ENCODE measurements at regions of chr11 and their contacts with region 1.

Region 1: DNA sequence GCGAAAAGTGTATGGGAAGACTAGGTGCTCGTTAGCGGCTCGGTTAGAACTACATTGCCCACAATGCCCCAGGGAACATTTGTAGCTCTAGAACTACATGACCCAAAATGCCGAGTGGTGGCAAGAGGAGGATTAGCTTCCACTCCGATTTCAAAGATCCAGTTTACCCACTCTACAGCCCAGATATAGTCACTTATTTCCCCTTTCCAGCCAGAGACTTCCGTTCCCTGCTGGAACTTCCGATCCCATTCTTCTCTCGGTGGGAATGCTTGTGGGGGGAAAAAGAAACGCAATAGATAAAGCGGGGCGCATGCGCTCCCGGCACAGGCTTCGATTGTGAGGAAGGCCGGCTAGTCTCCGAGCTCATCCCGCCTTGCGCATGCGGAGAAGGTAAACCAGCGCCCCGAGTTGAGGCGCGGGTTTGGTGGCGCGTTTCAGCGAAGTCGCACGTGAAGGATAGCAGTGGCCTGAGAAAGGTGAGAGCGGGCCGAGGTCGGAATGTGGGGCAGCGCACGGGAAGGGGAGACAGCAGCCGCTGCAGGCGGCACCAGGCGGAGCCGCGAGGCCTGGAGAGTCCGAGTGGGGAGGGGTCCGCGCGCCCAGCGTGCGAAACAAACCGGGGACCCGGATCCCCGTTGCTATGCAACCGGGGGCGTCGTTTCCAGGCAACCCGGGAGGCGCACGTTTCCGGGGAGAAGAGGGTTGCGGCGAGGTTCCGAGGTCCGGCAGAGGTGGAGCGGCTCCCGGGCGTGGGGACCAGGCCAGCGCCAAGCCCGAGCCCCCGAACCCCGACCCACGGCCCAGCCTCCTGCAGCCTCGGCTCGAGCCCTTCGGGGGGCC is at the start of gene TMEM109:
- DNase-seq: peak; percentile 77 to 93 (median 85)
- ATAC-seq: peak; percentile 70 to 79 (median 74)
- H3K4me3 ChIP-seq: peak within 1 kb of the TSS; percentile 69 to 96
- H3K4me3 Mint-ChIP-seq: peak within 1 kb of the TSS; percentile 97 to 98 (median 98)
- H3K27ac ChIP-seq: peak within 1 kb of the TSS; percentile 94
- H3K27ac Mint-ChIP-seq: peak within 1 kb of the TSS; percentile 98
- H3K4me1 ChIP-seq: peaks cover 34 to 66% of the 10 kb centered on the region in 2 experiments
- H3K4me1 Mint-ChIP-seq: peaks cover 63 to 69% (median 65%) of the 10 kb centered on the region in 3 donors
- H3K27me3 ChIP-seq: no peaks in the 10 kb centered on the region
- H3K27me3 Mint-ChIP-seq: no peaks in the 10 kb centered on the region
- total RNA-seq, gene TMEM109: 55.6 to 82.1 (median 71.8) TPM

Region 2: DNA sequence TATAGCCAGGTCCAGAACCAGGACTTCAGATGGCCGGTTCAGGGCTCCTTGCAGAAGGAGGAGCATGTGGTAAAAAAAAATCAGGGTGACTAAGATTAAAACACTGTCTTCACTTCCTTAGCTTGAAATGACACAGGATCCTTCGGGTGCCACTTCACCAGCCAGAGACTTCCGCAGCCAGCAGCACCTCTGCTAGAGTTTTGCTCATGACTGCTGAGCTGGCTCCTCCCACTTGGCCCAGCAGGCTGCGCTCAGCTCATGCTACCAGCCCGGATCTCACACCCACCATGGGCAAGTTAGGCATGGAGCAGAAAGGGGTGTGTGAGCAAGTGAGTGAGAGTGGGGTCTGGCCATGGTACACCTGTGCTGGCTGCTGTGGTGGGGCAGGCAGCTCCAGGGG is 196.1 kb before region 1 on chr11:
- CTCF ChIA-PET with region 1: no interaction called
- POLR2A ChIA-PET with region 1: no interaction called
- DNase-seq: peak in 17 of 35 experiments; percentile 1 to 47 (median 7)
- ATAC-seq: peak in 2 of 4 experiments; percentile 32 to 36
- H3K4me3 ChIP-seq: no peak overlapping the region
- H3K4me3 Mint-ChIP-seq: no peak overlapping the region
- H3K27ac ChIP-seq: no peak overlapping the region
- H3K27ac Mint-ChIP-seq: no peak overlapping the region
- H3K4me1 ChIP-seq: no peaks in the 10 kb centered on the region
- H3K4me1 Mint-ChIP-seq: no peaks in the 10 kb centered on the region
- H3K27me3 ChIP-seq: peaks cover 0 to 17% of the 10 kb centered on the region in 2 experiments
- H3K27me3 Mint-ChIP-seq: peaks cover 33 to 51% of the 10 kb centered on the region in 2 donors

Region 3: GRCh38 chr11:60899046-60899936 is 14.7 kb before region 1 on chr11:
- CTCF ChIA-PET with region 1: interaction called, 4 to 16 read pairs
- POLR2A ChIA-PET with region 1: no interaction called
- DNase-seq: peak in 6 of 35 experiments; percentile 8 to 73 (median 24)
- ATAC-seq: peak; percentile 71 to 74 (median 72)
- H3K4me3 ChIP-seq: no peak overlapping the region
- H3K4me3 Mint-ChIP-seq: no peak overlapping the region
- H3K27ac ChIP-seq: no peak overlapping the region
- H3K27ac Mint-ChIP-seq: no peak overlapping the region
- H3K4me1 ChIP-seq: peaks cover 0 to 6% of the 10 kb centered on the region in 2 experiments
- H3K4me1 Mint-ChIP-seq: peaks cover 18 to 20% (median 19%) of the 10 kb centered on the region in 3 donors
- H3K27me3 ChIP-seq: no peaks in the 10 kb centered on the region
- H3K27me3 Mint-ChIP-seq: no peaks in the 10 kb centered on the region

Region 4: DNA sequence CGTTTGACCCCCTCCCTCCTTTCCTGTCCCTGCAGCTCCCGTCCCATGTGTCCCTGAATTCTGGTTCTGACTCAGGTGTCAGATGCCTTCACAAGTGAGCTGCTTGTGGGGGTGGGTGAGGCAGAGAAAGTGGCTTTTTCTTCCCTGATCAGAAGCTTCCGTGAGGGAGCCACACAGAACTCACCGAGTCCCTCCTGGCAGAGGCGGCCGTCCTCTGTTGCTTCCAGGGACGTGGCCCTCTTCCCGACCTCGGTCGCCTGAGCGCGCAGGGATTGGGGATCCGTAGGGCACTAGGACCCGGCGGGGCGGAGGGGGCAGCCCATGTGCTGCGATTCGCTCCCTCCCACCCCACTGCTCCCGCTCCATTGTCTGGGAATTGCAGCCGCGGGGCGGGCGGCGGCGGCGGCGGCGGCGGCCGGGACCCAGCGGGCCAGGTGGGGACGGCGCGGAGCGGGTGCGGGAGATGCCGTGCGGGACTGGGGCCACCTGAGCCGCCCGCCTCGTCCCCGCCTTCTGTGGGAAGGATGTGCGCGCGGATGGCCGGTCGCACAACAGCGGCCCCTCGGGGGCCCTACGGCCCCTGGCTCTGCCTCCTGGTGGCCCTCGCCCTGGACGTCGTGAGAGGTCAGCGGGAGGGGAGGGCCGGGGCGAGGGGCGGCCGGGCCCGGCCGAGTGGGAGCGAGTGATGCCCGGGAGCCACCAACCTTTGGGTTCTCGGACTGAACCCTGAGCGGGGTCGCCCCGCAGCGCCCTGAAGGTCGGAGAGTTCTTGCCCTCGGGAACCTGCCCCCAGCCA is 10.3 kb after region 1 on chr11 and contains the start of gene TMEM132A:
- CTCF ChIA-PET with region 1: interaction called in 1 of 2 experiments, 11 read pairs
- POLR2A ChIA-PET with region 1: no interaction called
- DNase-seq: peak in 1 of 35 experiments; percentile 33
- ATAC-seq: peak; percentile 41 to 58 (median 48)
- H3K4me3 ChIP-seq: peak within 1 kb of the TSS; percentile 44 to 54
- H3K4me3 Mint-ChIP-seq: peak within 1 kb of the TSS; percentile 63 to 69 (median 64)
- H3K27ac ChIP-seq: no peak within 1 kb of the TSS
- H3K27ac Mint-ChIP-seq: no peak within 1 kb of the TSS
- H3K4me1 ChIP-seq: peaks cover 0 to 26% of the 10 kb centered on the region in 2 experiments
- H3K4me1 Mint-ChIP-seq: peaks cover 12 to 22% (median 18%) of the 10 kb centered on the region in 3 donors
- H3K27me3 ChIP-seq: peaks cover 0 to 64% of the 10 kb centered on the region in 2 experiments
- H3K27me3 Mint-ChIP-seq: peaks cover 11 to 35% of the 10 kb centered on the region in 2 donors
- total RNA-seq, gene TMEM132A: 0.23 to 1.6 (median 1.2) TPM in 3 of 5 donors, not detected in the others

Region 5: DNA sequence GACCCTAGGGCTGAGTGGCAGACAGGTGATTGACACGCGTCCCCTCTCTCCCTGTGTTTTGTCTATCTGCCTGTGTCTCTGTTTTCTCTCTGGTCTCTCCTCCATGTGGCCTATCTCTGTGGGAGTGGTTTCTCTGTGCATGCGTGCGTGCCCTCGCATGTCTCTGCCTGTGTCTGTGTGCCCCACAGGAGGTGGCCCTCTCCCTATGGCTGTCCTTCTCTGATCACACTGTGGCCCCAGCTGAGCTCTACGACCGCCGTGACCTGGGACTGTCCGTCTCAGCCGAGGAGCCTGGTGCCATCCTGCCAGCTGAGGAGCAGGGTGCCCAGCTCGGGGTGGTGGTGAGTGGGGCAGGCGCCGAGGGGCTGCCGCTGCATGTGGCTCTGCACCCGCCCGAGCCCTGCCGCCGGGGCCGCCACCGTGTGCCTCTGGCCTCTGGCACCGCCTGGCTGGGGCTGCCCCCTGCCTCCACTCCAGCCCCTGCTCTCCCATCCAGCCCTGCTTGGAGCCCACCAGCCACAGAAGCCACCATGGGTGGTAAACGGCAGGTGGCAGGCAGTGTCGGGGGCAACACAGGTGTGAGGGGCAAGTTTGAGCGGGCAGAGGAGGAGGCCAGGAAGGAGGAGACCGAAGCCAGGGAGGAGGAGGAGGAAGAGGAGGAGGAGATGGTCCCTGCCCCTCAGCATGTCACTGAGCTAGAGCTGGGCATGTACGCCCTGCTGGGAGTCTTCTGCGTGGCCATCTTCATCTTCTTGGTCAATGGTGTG is 21.8 kb after region 1 on chr11:
- CTCF ChIA-PET with region 1: no interaction called
- POLR2A ChIA-PET with region 1: no interaction called
- DNase-seq: no peak
- ATAC-seq: no peak
- H3K4me3 ChIP-seq: no peak overlapping the region
- H3K4me3 Mint-ChIP-seq: no peak overlapping the region
- H3K27ac ChIP-seq: no peak overlapping the region
- H3K27ac Mint-ChIP-seq: no peak overlapping the region
- H3K4me1 ChIP-seq: no peaks in the 10 kb centered on the region
- H3K4me1 Mint-ChIP-seq: peaks cover 0 to 3% (median 0%) of the 10 kb centered on the region in 3 donors
- H3K27me3 ChIP-seq: peaks cover 0 to 31% of the 10 kb centered on the region in 2 experiments
- H3K27me3 Mint-ChIP-seq: peaks cover 0 to 8% of the 10 kb centered on the region in 2 donors

Region 6: DNA sequence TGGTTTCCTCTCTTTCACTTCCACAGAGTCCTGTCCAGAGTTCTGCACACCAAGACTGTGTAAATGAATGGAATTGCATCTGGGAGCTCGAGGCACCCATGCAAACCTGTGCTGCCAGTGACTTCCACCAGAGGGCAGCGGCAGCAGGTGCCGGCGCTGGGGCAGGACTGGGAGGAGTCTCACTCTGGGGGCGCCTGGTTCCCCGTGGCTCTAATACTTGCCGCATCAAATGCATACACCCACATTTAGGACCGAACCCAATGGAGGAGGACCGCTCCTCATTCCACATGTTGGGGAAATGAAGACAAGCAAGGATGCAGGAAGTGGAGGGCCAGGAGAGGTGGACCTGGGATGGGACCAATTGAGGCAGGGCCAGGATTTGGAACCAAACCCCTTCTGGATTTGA is 56.4 kb after region 1 on chr11:
- CTCF ChIA-PET with region 1: interaction called in 1 of 2 experiments, 16 read pairs
- POLR2A ChIA-PET with region 1: interaction called, 4 read pairs
- DNase-seq: peak; percentile 61 to 88 (median 77)
- ATAC-seq: peak; percentile 55 to 70 (median 62)
- H3K4me3 ChIP-seq: peak overlapping the region; percentile 79 to 98
- H3K4me3 Mint-ChIP-seq: peak overlapping the region; percentile 92 to 94 (median 93)
- H3K27ac ChIP-seq: peak overlapping the region; percentile 85
- H3K27ac Mint-ChIP-seq: peak overlapping the region; percentile 83 to 85
- H3K4me1 ChIP-seq: peaks cover 18 to 36% of the 10 kb centered on the region in 2 experiments
- H3K4me1 Mint-ChIP-seq: peaks cover 25 to 42% (median 30%) of the 10 kb centered on the region in 3 donors
- H3K27me3 ChIP-seq: no peaks in the 10 kb centered on the region
- H3K27me3 Mint-ChIP-seq: peaks cover 0 to 2% of the 10 kb centered on the region in 2 donors

Region 7: DNA sequence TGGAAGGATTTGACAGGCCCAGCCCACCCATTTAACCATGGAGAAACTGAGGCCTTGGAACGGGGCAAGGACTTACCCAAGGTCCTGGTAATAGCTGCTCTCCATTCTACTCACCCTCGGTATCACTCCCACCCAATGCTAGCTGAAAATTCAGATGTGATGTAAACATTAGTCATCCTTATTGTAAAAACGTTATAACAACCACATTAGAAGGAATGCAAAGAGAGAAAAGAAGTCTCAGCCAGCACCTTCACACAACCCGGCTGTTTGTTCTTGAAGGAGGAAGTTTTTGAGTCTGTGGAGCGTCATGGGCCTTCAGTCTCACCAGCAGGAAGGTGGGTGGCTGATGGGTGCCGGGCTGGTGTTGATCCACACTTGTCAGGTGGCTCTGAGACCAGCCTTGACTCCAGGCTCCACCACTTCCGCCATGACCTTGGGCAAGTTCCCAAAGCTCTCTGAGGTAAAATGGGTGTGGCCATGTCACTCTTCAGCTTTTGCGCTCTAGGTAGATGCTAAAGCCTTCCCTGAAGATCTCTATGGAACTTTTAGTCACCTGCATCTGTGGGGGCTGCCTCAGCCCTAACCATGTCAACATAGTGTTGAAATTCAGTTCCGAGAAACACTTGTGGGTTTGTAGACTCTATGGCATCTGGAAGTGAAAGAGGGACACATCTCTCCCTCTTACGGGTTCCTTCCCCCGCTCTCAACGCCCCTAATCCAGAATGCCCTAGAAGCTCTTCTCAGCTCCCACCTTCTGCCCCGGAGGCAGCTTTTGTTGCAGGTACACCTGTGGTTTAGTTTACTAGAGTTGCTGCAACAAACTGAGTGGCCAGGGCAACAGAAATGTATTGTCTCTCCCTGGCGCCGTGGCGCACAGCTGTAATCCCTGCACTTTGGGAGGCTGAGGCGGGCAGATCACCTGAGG is 72.2 kb after region 1 on chr11:
- CTCF ChIA-PET with region 1: interaction called in 1 of 2 experiments, 6 read pairs
- POLR2A ChIA-PET with region 1: interaction called, 4 to 12 read pairs
- DNase-seq: peak; percentile 69 to 99 (median 94)
- ATAC-seq: peak; percentile 90 to 91 (median 90)
- H3K4me3 ChIP-seq: peak overlapping the region; percentile 36 to 41
- H3K4me3 Mint-ChIP-seq: peak overlapping the region; percentile 77 to 94 (median 77)
- H3K27ac ChIP-seq: peak overlapping the region; percentile 98
- H3K27ac Mint-ChIP-seq: peak overlapping the region; percentile 95 to 96
- H3K4me1 ChIP-seq: peaks cover 64 to 92% of the 10 kb centered on the region in 2 experiments
- H3K4me1 Mint-ChIP-seq: peaks cover 92 to 94% (median 93%) of the 10 kb centered on the region in 3 donors
- H3K27me3 ChIP-seq: no peaks in the 10 kb centered on the region
- H3K27me3 Mint-ChIP-seq: no peaks in the 10 kb centered on the region

Measured in T-cell (primary cell).